KBM-7 (cell line): ENCODE measurements at regions of chr9 and their contacts with region 1.

Region 1: DNA sequence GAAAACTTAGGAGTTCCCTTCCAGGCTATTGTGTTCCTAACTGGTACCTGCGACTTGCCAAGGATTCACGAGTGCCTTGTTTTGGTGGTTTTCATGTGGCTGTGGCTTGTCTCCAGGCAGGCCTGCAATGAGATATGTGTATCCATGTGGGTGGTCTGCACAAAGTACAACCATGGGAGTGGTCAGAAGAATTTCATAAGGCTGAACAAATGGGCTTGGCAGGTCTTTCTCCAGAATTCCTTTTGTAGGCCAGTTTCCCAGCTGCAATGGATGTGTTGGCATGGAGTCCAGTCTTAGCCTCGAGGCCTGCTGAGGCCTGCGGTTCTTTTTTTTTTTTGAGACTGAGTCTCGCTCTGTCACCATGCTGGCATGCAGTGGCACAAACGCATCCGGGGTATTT is 28.8 kb upstream of the MELK start:
- DNase-seq: no peak

Region 2: GRCh38 chr9:36632892-36633291 is 89.0 kb after region 1 on chr9:
- in situ Hi-C with region 1: loop called (anchors 25 kb)
- DNase-seq: peak; percentile 43

Region 3: DNA sequence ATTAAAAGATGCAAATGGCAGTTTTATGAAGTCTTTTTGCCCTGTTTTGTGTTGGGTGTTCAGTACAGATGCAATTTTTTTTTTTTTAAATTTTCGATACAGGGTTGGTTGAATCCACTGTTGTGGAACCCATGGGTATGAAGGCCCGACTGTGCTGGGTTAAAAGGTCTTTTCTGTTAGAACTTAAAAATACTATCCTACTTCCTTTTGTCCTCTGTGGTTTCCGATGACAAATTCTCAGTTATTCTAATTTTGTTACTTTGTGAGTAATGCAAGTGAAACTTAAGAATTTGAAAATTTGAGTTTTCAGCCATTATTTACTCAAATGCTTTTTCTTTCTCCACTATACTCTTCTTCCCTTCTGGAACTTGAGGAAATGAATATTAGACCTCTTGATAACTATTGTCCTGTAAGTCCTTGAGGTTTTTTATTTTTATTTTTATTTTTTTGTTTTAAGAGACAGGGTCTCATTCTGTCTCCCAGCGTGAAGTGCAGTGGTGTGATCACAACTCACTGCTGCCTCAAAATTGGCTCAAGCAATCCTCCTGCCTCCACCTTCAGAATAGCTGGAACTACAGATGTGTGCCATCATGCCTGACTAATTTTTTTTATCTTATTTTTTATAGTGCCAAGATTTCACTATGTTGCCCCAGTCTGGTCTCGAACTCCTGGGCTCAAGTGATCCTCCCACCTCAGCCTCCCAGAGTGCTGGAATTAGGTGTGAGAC is 644.0 kb after region 1 on chr9:
- in situ Hi-C with region 1: no loop called
- DNase-seq: peak; percentile 38